MCF 10A (cell line): ENCODE measurements at regions of chr1 and their contacts with region 1.

Region 1: DNA sequence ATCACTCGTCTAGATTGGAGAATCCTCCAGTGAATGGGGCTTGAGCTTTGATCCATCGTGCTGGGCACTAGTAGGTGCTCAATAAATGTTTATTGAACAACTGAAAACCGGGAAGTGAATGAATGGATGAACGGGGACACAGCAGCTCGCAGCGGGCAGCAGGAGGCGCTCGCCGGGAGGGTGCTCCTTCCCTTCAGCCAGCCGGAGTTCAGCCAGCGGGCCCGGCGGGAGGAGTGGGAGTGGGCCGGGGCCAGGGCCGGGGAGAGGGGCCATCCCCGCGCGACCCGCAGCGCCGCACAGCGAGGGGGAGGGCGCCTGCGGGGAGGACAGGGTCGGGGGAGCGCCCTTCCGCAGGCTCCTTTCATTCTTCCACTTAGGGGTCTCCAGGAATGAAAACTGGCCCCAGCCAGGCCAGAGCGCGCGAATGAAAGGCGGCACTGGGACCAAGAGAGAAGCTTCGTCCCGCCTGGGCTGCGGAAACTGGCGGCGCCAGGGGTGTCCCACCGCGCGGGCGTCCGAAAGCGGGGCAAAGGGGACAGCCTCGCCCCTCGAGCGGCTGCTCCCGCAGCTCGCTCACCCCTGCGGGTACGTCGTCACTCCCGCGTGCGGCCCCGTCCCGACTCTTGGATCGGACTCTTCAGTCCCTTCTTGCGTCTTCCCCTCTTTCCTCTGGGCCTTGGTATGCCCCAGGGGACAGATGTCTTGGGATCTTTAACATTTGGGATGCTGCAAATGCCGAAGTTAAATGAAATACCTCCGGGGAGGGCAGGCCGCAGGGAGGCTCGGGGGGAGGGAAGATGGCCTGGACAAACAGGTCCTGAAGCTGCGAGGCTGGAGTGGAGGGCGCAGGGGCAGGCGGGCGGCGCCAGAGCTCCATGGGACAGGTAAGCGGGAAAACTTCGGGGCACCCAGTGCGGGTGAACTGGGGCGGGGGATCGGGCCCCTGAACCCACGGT is 3.6 kb upstream of the INAVA start:
- DNase-seq: peak; percentile 81
- H3K4me3 Mint-ChIP-seq: peak overlapping the region; percentile 80
- H3K27ac Mint-ChIP-seq: peak overlapping the region; percentile 83
- H3K4me1 Mint-ChIP-seq: peaks cover 59% of the 10 kb centered on the region
- H3K27me3 Mint-ChIP-seq: no peaks in the 10 kb centered on the region
- CTCF ChIP-seq: peak; percentile 61

Region 2: GRCh38 chr1:200090252-200091096 is 800.6 kb before region 1 on chr1:
- CTCF ChIA-PET with region 1: no interaction called
- POLR2A ChIA-PET with region 1: no interaction called
- intact Hi-C with region 1: no loop called
- DNase-seq: peak; percentile 25
- H3K4me3 Mint-ChIP-seq: no peak overlapping the region
- H3K27ac Mint-ChIP-seq: no peak overlapping the region
- H3K4me1 Mint-ChIP-seq: peaks cover 5% of the 10 kb centered on the region
- H3K27me3 Mint-ChIP-seq: no peaks in the 10 kb centered on the region
- CTCF ChIP-seq: peak; percentile 16

Region 3: DNA sequence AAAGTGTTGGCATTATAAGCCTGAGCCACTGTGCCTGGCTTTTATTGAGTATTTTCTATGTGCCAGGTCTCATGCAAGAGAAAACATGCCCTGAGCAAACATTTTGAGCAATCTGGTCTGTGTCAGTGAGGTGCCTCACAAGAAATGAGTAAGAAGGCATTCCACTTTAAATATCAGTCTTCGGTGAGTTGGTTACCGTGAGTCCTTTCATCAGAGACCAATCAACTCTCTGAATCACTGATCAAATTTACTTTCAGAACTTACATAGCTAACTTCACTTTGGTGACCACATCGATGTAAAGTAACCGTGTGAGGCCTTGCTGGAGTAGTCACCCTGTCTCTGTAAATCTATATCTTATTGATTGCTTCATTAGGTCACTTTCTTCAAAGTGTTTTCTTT is 207.1 kb before region 1 on chr1:
- CTCF ChIA-PET with region 1: no interaction called
- POLR2A ChIA-PET with region 1: no interaction called
- intact Hi-C with region 1: no loop called
- DNase-seq: peak; percentile 75
- H3K4me3 Mint-ChIP-seq: no peak overlapping the region
- H3K27ac Mint-ChIP-seq: peak overlapping the region; percentile 46
- H3K4me1 Mint-ChIP-seq: peaks cover 5% of the 10 kb centered on the region
- H3K27me3 Mint-ChIP-seq: no peaks in the 10 kb centered on the region
- CTCF ChIP-seq: no peak

Region 4: GRCh38 chr1:200850559-200850958 is 40.5 kb before region 1 on chr1:
- CTCF ChIA-PET with region 1: interaction called, 10 read pairs
- POLR2A ChIA-PET with region 1: interaction called, 5 read pairs
- intact Hi-C with region 1: no loop called
- DNase-seq: no peak
- H3K4me3 Mint-ChIP-seq: no peak overlapping the region
- H3K27ac Mint-ChIP-seq: peak overlapping the region; percentile 63
- H3K4me1 Mint-ChIP-seq: peaks cover 10% of the 10 kb centered on the region
- H3K27me3 Mint-ChIP-seq: no peaks in the 10 kb centered on the region
- CTCF ChIP-seq: no peak

Region 5: DNA sequence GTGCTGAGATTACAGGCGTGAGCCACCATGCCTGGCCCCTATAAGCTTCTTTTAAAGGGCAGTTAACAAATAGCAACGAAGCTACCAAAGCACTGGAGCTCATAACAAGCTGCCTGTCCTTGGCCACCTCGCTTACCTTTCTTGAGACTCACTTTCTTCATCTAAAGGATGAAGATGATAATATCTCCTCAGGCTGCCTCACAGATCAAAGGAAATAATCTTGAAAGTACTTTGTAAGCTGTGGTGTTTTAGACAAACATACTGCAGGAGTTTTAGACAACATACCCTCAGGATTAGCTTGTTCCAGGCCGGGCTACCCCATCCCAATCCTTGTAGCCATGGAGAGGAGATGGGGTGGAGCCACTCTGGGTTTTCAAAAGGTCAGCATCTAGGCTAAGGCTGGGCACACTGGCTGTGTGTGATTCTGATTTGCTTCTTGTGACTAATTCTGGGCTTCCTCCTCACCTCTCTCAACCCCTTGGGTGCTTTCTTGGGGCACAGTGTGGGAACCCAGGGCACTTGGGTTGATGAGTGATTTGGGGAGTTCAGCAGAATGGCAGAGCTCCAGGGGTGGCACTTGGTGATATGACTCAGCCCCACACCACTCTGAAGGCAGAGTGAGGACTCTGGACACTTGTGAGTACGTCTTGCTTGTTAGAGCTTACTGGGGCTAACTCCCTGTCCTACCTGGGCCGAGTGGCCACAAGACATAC is 13.1 kb before region 1 on chr1:
- CTCF ChIA-PET with region 1: interaction called, 21 read pairs
- POLR2A ChIA-PET with region 1: interaction called, 28 read pairs
- intact Hi-C with region 1: no loop called
- DNase-seq: no peak
- H3K4me3 Mint-ChIP-seq: no peak overlapping the region
- H3K27ac Mint-ChIP-seq: no peak overlapping the region
- H3K4me1 Mint-ChIP-seq: no peaks in the 10 kb centered on the region
- H3K27me3 Mint-ChIP-seq: peaks cover 27% of the 10 kb centered on the region
- CTCF ChIP-seq: no peak

Region 6: DNA sequence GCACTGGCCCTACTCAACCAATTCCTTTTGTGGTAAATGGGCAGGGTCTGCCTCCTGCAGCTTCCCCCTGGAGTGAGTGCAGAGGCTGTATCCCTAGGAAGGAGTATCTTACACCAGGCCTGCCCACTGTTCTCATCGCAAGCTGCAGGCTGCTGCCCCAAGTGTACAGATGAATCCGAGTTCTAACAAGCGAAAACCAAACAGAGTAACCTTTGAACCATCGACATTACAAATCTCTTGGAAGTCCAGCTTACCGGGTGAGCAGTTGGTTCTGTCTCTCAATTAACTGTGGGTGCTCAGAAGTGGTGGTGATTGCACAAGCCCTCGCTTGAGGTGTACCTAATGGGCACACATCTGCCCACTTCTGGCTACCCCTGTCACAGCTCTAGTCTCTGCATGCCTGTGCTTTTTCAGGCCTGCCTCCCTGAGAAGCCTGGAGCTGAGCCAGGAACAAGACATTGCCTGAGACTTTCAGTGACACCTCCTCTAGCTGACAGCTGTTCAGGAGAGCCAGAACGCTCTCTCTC is 26.3 kb after region 1 on chr1:
- CTCF ChIA-PET with region 1: interaction called, 13 read pairs
- POLR2A ChIA-PET with region 1: interaction called, 65 read pairs
- intact Hi-C with region 1: no loop called
- DNase-seq: peak; percentile 98
- H3K4me3 Mint-ChIP-seq: no peak overlapping the region
- H3K27ac Mint-ChIP-seq: peak overlapping the region; percentile 2
- H3K4me1 Mint-ChIP-seq: peaks cover 38% of the 10 kb centered on the region
- H3K27me3 Mint-ChIP-seq: no peaks in the 10 kb centered on the region
- CTCF ChIP-seq: no peak